Esophagus muscularis mucosa (tissue), 4 donors: ENCODE measurements at regions of chr20 and their contacts with region 1.

Region 1: DNA sequence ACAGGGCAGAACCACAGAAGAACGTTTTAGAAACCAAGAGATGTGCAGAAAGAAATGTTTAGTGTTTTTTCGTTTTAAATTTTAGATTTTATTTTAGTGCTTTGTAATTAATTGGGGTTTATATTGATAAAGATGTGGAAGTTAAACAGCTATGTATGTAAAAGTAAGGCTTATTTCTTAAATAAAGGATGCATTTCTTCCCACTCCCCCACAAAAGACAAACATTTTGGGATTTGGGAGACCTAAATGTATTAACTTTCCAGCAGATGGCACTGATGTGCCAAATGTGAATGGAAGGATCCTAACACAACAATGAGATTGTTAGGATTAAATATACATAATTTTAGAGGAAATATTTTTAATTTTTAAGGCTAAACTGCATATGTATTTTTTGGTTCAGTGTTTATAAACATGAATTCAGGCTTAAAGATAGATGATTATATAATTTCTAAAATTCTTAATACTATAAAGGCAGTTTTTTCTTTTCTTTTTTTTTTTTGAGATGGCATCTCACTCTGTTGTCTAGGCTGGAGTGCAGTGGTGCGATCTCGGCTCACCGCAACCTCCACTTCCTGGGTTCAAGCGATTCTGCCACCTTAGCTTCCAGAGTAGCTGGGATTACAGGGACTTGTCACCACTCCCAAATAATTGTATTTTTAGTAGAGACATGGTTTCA is 12.0 kb downstream of the PFDN4 start:
- DNase-seq: no peak
- H3K4me3 ChIP-seq: no peak overlapping the region
- H3K27ac ChIP-seq: no peak overlapping the region
- H3K4me1 ChIP-seq: peaks cover 5 to 9% (median 7%) of the 10 kb centered on the region in 4 donors
- H3K27me3 ChIP-seq: no peaks in the 10 kb centered on the region
- CTCF ChIP-seq: peak; percentile 27 to 46 (median 32)
- EP300 ChIP-seq: no peak
- POLR2A ChIP-seq: no peak

Region 2: DNA sequence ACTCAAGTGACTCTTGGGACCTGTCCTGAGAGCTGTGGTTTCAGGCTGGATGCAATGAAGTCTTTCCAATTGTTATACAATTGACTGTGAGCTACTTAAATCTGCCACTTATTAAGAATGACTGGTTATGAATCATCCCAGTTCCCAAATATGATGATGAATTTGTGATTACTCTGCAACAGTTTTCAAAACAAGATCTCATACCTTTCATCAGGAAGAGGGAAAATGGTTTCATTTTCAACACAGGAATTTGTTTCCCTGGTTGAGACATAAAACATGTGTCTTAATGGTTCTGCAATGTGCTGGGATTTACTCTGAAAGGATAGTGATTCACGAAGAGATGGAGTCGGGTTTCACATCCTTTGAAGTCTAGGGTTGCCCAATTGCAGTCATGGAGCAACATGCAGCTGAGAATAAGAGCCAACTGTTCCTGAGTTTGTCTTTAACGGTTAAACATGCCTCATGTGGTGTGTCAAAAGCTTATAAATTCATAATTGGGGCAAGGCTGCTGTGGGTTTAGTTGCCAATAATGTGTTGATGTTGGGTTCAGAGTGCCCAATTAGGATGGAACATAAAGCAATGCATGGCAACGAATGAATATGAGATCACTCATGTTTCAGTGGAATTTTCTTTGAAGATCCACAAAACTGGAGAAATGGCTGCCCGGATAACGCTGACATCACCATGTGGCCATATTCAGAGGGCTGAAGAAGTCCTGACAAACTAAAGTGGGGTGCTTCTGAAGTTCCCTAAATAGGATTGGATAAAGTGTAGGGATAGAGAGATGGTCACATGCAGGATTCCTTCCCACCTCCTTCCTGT is 87.1 kb before region 1 on chr20:
- intact Hi-C with region 1: no loop called
- DNase-seq: no peak
- H3K4me3 ChIP-seq: no peak overlapping the region
- H3K27ac ChIP-seq: peak overlapping the region in 2 of 4 donors; percentile 34
- H3K4me1 ChIP-seq: no peaks in the 10 kb centered on the region
- H3K27me3 ChIP-seq: peaks cover 0 to 19% (median 0%) of the 10 kb centered on the region in 4 donors
- CTCF ChIP-seq: no peak
- EP300 ChIP-seq: no peak
- POLR2A ChIP-seq: no peak

Region 3: DNA sequence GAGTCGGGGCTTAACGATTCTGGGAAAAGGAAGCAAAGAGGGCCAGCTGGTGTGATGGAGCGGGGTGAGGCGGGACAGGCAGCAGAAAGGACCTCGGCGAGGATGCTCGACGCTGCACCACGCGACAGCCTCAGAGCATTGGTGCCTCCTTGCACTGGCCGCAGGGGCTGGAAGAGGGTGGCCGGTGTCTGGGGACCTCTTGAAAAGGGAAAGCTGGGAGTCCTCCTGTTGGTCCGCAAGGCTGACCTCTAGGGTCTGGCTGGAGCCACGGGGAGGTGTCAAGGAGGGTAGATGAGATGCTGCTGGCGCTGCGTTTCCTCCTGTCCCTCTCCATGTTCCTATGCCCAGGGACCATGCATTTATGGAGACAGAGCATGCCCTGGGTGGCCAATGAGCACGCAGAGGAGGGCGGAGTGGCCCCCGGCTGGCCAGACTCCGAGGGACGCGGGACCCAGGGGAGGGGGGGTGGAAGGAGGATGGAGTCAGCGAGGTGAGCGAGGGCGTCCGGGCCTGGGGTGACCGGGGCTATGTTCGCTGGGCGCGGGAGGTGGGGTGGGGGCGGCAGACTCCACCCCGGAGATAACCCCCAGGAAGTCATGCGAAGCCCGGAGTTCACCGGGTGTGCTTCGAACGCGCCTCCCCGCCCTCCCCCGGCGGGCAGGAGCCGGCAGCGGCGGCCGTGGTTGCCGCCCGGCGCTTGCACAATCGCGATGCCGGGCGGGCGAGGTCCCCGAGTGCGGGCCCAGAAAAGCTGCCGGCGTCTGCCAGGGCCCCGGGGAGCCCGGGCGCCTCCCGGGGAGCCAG is 46.0 kb before region 1 on chr20 and contains the start of gene CYP24A1:
- intact Hi-C with region 1: no loop called
- DNase-seq: no peak
- H3K4me3 ChIP-seq: peak within 1 kb of the TSS in 3 of 4 donors; percentile 3 to 20 (median 18)
- H3K27ac ChIP-seq: no peak within 1 kb of the TSS
- H3K4me1 ChIP-seq: peaks cover 19 to 25% (median 20%) of the 10 kb centered on the region in 4 donors
- H3K27me3 ChIP-seq: peaks cover 0 to 89% (median 17%) of the 10 kb centered on the region in 4 donors
- CTCF ChIP-seq: no peak
- EP300 ChIP-seq: no peak
- POLR2A ChIP-seq: no peak
- total RNA-seq, gene CYP24A1: not detected

Region 4: DNA sequence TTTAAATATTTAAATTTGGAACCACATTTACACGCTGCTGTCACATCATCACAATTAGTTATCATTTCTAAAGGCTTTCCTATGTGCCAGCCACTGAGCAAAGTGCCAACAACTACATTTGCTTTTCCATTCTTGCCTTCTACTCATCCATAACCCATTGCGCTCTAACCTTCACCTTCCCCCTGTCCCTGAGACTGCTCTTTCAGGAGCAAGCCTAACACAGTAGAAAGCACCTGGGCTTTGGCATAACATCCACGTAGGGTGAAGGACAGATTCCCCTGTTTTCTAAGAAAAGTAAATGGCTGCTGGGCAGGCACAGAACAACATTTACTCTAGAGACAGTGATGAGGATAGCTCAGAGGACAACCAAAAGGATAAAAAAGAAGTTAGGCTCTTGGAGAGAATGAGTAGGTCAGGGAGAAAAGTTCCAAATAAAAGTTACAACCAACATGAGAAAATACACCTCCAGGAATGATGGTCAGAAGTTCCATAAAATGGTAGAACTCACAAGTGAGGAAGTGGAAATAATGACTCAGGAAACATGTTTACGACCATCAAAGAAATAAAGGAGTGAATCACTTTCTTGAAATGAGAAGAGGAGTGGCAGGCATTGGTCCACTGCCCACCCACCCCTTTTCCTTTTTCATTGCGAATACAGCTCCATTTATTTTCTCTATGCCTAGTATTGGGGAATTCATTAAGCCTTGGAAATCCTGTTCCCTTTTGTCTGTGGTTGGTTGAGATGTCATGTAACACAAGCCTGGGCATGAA is 65.2 kb after region 1 on chr20:
- intact Hi-C with region 1: no loop called
- DNase-seq: no peak
- H3K4me3 ChIP-seq: no peak overlapping the region
- H3K27ac ChIP-seq: no peak overlapping the region
- H3K4me1 ChIP-seq: no peaks in the 10 kb centered on the region
- H3K27me3 ChIP-seq: no peaks in the 10 kb centered on the region
- CTCF ChIP-seq: no peak
- EP300 ChIP-seq: no peak
- POLR2A ChIP-seq: no peak

Region 5: GRCh38 chr20:54649511-54649962 is 429.6 kb after region 1 on chr20:
- intact Hi-C with region 1: loop called (anchors 5 kb)
- DNase-seq: no peak
- H3K4me3 ChIP-seq: no peak overlapping the region
- H3K27ac ChIP-seq: no peak overlapping the region
- H3K4me1 ChIP-seq: no peaks in the 10 kb centered on the region
- H3K27me3 ChIP-seq: peaks cover 0 to 3% (median 0%) of the 10 kb centered on the region in 4 donors
- CTCF ChIP-seq: peak; percentile 65 to 86 (median 69)
- EP300 ChIP-seq: no peak
- POLR2A ChIP-seq: no peak